ENCODE measurements at regions of chr2 and their contacts with region 1.

Region 1: GRCh38 chr2:227853204-227853629 is 18.2 kb upstream of the DAW1 start:
- DNase-seq: no peak
- H3K4me3 ChIP-seq: no peak overlapping the region
- H3K27ac ChIP-seq: no peak overlapping the region
- H3K4me1 ChIP-seq: peaks cover 0 to 4% (median 0%) of the 10 kb centered on the region in 4 donors
- H3K27me3 ChIP-seq: no peaks in the 10 kb centered on the region
- CTCF ChIP-seq: no peak
- EP300 ChIP-seq: no peak
- POLR2A ChIP-seq: no peak

Region 2: DNA sequence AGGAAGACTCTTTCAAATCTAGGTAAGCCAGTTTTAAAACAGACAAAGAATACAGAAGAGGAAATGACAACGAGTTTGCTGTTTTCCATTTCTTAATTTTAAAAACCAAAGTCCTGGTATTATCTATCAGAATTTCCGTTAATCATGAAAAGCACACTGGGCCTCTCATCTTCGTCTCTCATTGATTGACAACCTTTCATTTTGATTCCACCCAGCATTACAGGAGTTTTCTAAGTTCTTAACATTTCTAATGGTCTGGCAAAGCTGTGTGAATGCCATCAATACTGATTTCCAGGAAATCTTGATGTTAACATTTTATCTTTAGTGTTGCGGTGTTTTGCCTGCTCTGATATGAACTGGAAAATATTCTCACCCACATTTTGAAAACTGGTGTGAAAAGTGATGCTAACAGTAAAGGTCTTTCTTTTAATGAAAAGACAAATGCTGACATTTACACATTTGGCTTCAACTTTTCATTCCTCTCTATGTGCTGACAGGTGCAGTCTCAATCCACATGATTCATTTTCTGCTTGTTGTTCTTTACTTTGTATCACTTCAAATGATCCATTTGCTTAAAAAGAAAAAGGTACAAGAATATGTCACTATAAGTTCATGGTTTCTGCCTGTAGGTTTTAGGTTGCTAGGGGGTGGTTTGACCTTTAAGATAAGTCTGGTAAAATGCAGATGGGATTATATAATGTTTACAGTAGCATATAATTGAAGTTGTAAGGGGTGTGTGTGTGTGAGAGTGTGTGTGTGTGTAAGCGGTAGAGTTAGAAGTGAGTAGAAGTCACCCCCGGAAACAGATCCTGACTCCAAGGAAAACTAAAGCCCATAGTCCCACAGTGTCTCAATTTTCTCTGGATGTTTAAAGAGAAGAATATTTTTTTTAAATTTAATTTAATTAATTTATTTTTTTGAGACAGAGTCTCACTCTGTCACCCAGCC is 78.0 kb before region 1 on chr2:
- in situ Hi-C with region 1: loop called in 1 of 4 experiments (anchors 5 kb)
- intact Hi-C with region 1: no loop called
- DNase-seq: no peak
- H3K4me3 ChIP-seq: no peak overlapping the region
- H3K27ac ChIP-seq: peak overlapping the region in 3 of 4 donors; percentile 37 to 59 (median 41)
- H3K4me1 ChIP-seq: peaks cover 0 to 23% (median 10%) of the 10 kb centered on the region in 4 donors
- H3K27me3 ChIP-seq: no peaks in the 10 kb centered on the region
- CTCF ChIP-seq: peak in 2 of 5 experiments; percentile 19 to 25
- EP300 ChIP-seq: no peak
- POLR2A ChIP-seq: no peak